ENCODE measurements at regions of chr20 and their contacts with region 1.

Region 1: GRCh38 chr20:1325173-1326030 is 3.5 kb downstream of the SDCBP2 start:
- DNase-seq: peak; percentile 99
- ATAC-seq: peak; percentile 89
- H3K4me3 Mint-ChIP-seq: no peak overlapping the region
- H3K27ac Mint-ChIP-seq: no peak overlapping the region
- H3K4me1 Mint-ChIP-seq: peaks cover 25% of the 10 kb centered on the region
- H3K27me3 Mint-ChIP-seq: no peaks in the 10 kb centered on the region

Region 2: DNA sequence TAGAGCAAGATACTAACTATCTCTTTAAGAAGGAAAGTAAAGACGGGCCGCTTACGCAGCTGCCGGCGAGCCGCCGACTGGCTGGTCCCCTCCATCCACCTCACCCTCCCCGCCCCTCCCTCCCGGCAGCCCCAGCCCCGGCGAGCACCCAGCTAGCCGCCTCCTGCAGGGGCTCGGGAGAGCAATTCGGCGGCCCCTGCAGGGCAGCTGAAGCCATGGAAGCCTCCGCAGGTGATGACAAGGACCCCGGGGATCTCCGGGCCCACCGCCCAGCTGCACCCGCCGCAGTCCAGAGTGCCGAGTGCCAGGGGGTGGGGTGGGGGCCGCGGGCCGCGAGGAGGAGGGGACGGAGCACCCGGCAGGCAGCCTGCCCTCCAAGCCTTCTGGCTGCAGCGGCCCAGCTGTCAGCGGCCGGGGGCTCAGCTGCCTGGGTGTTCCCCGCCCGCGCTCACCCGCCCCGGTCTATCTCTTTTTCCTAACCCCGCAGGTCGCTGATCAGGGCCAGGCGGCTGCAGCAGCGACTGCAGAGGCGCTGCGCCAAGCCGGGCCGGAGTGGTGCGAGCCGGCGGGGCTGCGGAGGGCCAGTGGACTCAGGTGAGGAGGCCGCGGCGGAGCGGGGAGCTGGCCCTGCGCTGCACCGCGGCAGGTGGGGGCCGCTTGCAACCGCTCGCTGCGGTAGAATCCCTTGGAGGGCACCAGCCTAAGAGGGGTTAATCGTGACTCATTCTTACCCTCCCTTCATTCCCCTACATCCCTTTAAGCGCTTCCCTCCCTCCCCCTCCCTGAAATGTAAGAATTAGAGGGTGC is 59.0 kb before region 1 on chr20 and contains the start of gene SNPH:
- CTCF ChIA-PET with region 1: no interaction called
- POLR2A ChIA-PET with region 1: no interaction called
- DNase-seq: peak; percentile 84
- ATAC-seq: peak; percentile 95
- H3K4me3 Mint-ChIP-seq: peak within 1 kb of the TSS; percentile 88
- H3K27ac Mint-ChIP-seq: peak within 1 kb of the TSS; percentile 93
- H3K4me1 Mint-ChIP-seq: peaks cover 38% of the 10 kb centered on the region
- H3K27me3 Mint-ChIP-seq: no peaks in the 10 kb centered on the region
- total RNA-seq, gene SNPH: 6.5 to 7.6 TPM

Region 3: GRCh38 chr20:1313236-1313964 is 12.0 kb before region 1 on chr20:
- CTCF ChIA-PET with region 1: interaction called, 10 read pairs
- POLR2A ChIA-PET with region 1: interaction called, 4 read pairs
- DNase-seq: peak; percentile 66
- ATAC-seq: peak; percentile 62
- H3K4me3 Mint-ChIP-seq: no peak overlapping the region
- H3K27ac Mint-ChIP-seq: no peak overlapping the region
- H3K4me1 Mint-ChIP-seq: peaks cover 18% of the 10 kb centered on the region
- H3K27me3 Mint-ChIP-seq: peaks cover 6% of the 10 kb centered on the region

Region 4: GRCh38 chr20:1336699-1337367 is 11.4 kb after region 1 on chr20:
- CTCF ChIA-PET with region 1: interaction called, 5 read pairs
- POLR2A ChIA-PET with region 1: interaction called, 11 read pairs
- DNase-seq: peak; percentile 49
- ATAC-seq: peak; percentile 51
- H3K4me3 Mint-ChIP-seq: peak overlapping the region; percentile 18
- H3K27ac Mint-ChIP-seq: peak overlapping the region; percentile 85
- H3K4me1 Mint-ChIP-seq: peaks cover 37% of the 10 kb centered on the region
- H3K27me3 Mint-ChIP-seq: no peaks in the 10 kb centered on the region

Region 5: GRCh38 chr20:1509237-1509636 is 183.8 kb after region 1 on chr20:
- CTCF ChIA-PET with region 1: no interaction called
- POLR2A ChIA-PET with region 1: no interaction called
- DNase-seq: peak; percentile 62
- ATAC-seq: peak; percentile 51
- H3K4me3 Mint-ChIP-seq: no peak overlapping the region
- H3K27ac Mint-ChIP-seq: no peak overlapping the region
- H3K4me1 Mint-ChIP-seq: no peaks in the 10 kb centered on the region
- H3K27me3 Mint-ChIP-seq: peaks cover 32% of the 10 kb centered on the region